ENCODE measurements at regions of chr2 and their contacts with region 1.

Region 1: DNA sequence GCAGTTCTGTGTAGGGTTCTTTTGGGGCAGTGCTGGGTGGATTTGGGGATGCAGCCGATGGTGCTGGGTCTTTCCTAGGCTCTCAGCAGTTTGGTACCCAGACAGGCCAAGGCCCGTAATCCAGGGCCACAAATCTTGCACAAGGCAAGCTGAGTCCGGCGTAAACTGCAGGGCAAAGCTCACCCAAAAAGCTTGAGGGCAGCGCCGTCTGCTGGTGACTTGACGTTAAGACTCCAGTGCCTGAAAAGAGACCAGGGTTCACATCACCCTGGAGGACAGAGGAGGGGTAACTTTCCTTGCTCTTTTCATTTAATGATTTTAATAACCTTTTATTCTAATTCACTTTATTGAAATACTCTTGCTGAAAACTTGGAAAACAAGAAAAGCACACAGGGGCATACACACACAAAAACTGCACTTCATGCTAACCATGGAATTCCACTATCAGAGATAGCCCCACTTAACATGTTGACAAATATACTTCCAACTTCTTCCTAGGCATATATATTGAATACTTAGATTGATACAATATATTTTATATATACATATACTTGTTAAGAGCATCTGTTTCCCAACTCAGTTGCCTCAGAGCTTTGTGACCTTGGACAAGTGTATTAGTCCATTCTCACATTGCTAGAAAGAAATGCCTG is 38.9 kb downstream of the CNGA3 start:
- DNase-seq: peak; percentile 83 to 92
- H3K4me3 ChIP-seq: no peak overlapping the region
- H3K27ac ChIP-seq: no peak overlapping the region
- H3K4me1 ChIP-seq: peaks cover 0 to 6% (median 0%) of the 10 kb centered on the region in 4 donors
- H3K27me3 ChIP-seq: no peaks in the 10 kb centered on the region
- CTCF ChIP-seq: peak in 6 of 7 experiments; percentile 20 to 97 (median 88)
- EP300 ChIP-seq: no peak
- POLR2A ChIP-seq: no peak

Region 2: GRCh38 chr2:97697252-97698235 is 687.6 kb before region 1 on chr2:
- intact Hi-C with region 1: loop called (anchors 10 kb)
- DNase-seq: peak; percentile 94 to 95
- H3K4me3 ChIP-seq: no peak overlapping the region
- H3K27ac ChIP-seq: peak overlapping the region in 1 of 5 donors; percentile 7
- H3K4me1 ChIP-seq: peaks cover 0 to 5% (median 2%) of the 10 kb centered on the region in 4 donors
- H3K27me3 ChIP-seq: no peaks in the 10 kb centered on the region
- CTCF ChIP-seq: peak in 6 of 7 experiments; percentile 88 to 98 (median 94)
- EP300 ChIP-seq: no peak
- POLR2A ChIP-seq: no peak

Region 3: GRCh38 chr2:97806738-97807618 is 578.2 kb before region 1 on chr2:
- intact Hi-C with region 1: loop called (anchors 5 kb)
- DNase-seq: peak; percentile 86 to 93
- H3K4me3 ChIP-seq: no peak overlapping the region
- H3K27ac ChIP-seq: no peak overlapping the region
- H3K4me1 ChIP-seq: peaks cover 0 to 7% (median 0%) of the 10 kb centered on the region in 4 donors
- H3K27me3 ChIP-seq: no peaks in the 10 kb centered on the region
- CTCF ChIP-seq: peak in 5 of 7 experiments; percentile 76 to 91 (median 87)
- EP300 ChIP-seq: no peak
- POLR2A ChIP-seq: no peak

Region 4: DNA sequence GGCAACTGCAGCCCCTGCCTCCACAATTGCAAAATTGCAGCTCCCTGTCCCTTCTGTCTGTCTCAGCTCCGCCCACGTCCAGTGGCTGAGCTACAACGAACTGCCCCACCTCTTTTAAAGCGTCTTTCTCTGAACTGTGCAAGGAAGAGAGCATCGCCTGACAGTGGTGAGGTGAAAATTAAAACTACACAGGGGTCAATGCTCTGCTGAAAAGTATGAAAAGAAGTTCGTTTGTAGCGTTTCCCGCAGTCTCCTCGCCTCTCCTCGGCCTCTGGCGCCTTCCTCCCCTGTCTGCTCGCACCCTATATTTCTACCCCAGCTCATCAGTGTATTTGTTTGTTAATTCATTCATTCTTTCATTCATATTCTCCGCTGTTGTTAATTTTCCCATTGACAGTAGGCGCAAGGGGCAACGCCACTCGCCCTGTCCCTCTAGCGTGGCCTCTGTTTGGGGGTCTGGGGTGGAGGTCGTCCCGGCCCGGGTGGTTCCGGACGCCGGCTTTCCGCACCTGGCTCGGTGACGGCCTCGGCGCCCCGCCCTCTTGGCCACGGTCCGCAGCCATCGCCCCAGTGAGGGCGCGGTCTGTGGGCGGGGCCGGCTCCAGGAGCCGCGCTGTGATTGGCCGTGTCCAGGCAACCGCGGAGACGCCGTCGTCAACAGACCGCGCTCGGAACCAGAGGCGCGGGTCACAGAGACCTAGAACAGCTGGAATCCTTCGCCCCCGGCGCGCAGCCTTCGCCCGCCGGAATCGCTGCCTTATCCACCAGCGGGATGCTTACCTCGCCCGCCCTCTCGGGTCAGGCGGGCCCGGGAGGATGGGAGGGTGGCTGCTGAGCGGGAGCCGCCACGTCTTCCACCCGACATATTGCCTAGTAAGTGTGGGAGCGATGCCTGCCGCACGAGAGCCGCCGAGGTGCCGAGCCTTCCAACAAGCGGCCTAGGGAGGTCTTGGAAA is 298.4 kb before region 1 on chr2 and contains the start of gene VWA3B:
- intact Hi-C with region 1: no loop called
- DNase-seq: peak; percentile 91 to 95
- H3K4me3 ChIP-seq: peak within 1 kb of the TSS; percentile 49 to 67 (median 52)
- H3K27ac ChIP-seq: peak within 1 kb of the TSS; percentile 77 to 87 (median 83)
- H3K4me1 ChIP-seq: peaks cover 18 to 53% (median 25%) of the 10 kb centered on the region in 4 donors
- H3K27me3 ChIP-seq: peaks cover 0 to 13% (median 0%) of the 10 kb centered on the region in 3 donors
- CTCF ChIP-seq: no peak
- EP300 ChIP-seq: no peak
- POLR2A ChIP-seq: no peak
- total RNA-seq, gene VWA3B: 4.0 to 134 (median 4.9) TPM in 3 of 5 donors, not detected in the others

Region 5: GRCh38 chr2:98254504-98255059 is 130.6 kb before region 1 on chr2:
- intact Hi-C with region 1: no loop called
- DNase-seq: no peak
- H3K4me3 ChIP-seq: no peak overlapping the region
- H3K27ac ChIP-seq: no peak overlapping the region
- H3K4me1 ChIP-seq: no peaks in the 10 kb centered on the region
- H3K27me3 ChIP-seq: no peaks in the 10 kb centered on the region
- CTCF ChIP-seq: no peak
- EP300 ChIP-seq: no peak
- POLR2A ChIP-seq: no peak

Region 6: GRCh38 chr2:99765731-99766335 is 1380.7 kb after region 1 on chr2:
- intact Hi-C with region 1: no loop called
- DNase-seq: no peak
- H3K4me3 ChIP-seq: no peak overlapping the region
- H3K27ac ChIP-seq: no peak overlapping the region
- H3K4me1 ChIP-seq: no peaks in the 10 kb centered on the region
- H3K27me3 ChIP-seq: no peaks in the 10 kb centered on the region
- CTCF ChIP-seq: no peak
- EP300 ChIP-seq: no peak
- POLR2A ChIP-seq: no peak

Measured in stomach (tissue), 19 donors.